Activated B cell treated with CpG ODN at 0.5 μM for 24 hours (primary cell): ENCODE measurements at regions of chr2 and their contacts with region 1.

Region 1: DNA sequence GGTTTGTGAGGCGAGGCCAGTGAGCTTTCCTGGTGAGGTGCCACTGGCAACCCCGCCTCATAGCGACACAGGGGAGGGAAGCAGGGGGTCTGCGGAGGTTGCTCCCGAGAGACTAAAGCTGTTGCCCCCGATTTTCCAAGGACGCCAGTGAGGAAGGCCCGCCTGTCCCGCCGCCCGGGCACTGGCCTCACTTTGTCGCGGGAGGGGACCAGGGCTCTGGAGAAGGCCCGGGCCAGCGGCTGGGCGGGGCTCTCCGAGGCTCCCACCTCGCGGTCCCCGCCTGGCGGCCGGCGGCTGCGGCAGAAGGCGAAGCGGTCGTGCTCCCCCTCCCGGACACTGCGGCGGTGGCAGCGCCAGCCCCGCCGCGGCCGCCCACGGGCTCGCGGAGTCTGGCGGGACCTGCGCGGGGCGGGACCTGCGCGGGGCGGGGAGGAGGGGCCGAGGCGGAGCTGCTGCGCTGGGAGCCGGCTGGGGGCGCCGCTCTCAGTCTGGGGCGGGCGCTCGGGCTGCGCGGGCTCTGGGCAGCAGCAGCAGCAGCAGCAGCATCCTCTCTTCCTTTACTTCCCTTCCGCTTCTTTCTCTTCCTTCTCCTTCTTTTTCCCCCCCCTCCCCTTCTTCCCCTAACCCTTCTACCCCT is at the start of gene MAP2:
- DNase-seq: peak; percentile 85
- ATAC-seq: peak; percentile 98
- H3K4me3 Mint-ChIP-seq: peak within 1 kb of the TSS; percentile 87
- H3K27ac Mint-ChIP-seq: no peak within 1 kb of the TSS
- H3K4me1 Mint-ChIP-seq: peaks cover 24% of the 10 kb centered on the region
- H3K27me3 Mint-ChIP-seq: peaks cover 4% of the 10 kb centered on the region
- CTCF ChIP-seq: peak; percentile 20
- total RNA-seq, gene MAP2: 1.4 and 1.9 TPM in 2 replicates

Region 2: DNA sequence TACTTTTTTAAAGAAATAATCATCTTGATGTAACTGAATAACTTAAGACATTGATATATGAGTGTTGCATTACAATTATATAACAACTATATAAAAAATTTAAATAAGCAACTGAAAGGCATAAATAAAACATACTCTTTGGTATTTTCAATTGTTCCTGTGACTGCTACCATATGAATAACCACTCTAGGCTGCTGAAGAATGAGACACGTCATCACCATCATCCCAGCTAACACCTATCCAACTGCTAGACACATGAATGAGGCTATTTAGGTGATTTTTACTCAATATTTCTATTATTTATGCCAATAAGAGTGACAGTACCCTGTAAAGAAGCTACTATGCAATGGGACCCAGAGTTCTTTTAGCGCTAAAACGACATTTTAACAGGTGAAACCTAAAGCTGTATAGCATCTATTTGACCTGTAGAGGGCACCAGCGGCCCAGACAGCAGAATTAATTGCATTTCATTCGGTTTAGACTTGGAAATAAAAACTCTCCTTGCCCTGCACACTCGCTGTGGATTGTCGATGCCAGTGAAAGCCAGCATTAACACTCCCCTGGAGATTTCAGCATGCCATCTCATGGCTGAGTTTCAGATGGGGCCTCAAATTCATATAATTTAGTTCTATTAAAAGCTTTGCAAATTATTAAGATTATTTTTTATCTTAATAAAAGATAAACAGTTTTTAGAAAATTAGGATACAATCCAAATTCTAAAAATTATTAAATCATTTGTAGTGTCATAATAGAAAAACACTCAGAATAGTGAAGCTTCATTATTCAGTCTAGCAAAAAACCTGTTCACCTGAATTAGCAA is 89.3 kb before region 1 on chr2:
- CTCF ChIA-PET with region 1: interaction called, 32 read pairs
- POLR2A ChIA-PET with region 1: no interaction called
- intact Hi-C with region 1: loop called (anchors 1 kb)
- DNase-seq: no peak
- ATAC-seq: peak; percentile 56
- H3K4me3 Mint-ChIP-seq: no peak overlapping the region
- H3K27ac Mint-ChIP-seq: no peak overlapping the region
- H3K4me1 Mint-ChIP-seq: no peaks in the 10 kb centered on the region
- H3K27me3 Mint-ChIP-seq: peaks cover 4% of the 10 kb centered on the region
- CTCF ChIP-seq: peak; percentile 97

Region 3: DNA sequence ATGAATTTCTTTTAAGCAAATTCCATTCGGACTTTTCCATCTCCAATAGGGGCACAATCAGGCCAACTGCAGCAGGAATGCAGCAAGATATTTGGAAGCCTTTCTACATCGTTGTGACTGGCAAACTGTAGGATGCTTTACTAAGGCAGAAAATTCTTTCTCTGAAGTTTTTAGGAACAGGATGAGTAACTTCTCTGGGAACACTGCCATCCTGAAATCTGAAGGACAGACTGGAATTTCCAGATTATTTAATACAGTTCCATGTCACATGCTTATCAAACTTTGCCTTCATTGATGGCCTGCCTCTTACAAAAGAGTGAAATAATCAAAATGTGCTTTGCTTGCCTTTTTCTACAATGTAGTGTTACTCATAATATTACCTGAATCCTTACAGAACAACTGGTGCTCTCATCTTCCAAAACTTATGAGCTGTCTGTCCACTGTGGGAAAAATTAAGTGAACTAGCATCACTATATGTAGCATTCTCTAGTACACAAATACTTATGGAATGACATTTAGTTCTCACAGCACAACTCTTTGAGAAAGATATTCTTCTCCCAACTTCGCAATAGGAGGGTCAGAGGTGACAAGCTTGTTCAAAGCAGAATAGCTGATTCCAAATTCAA is 31.8 kb before region 1 on chr2:
- CTCF ChIA-PET with region 1: no interaction called
- POLR2A ChIA-PET with region 1: no interaction called
- intact Hi-C with region 1: no loop called
- DNase-seq: no peak
- ATAC-seq: no peak
- H3K4me3 Mint-ChIP-seq: no peak overlapping the region
- H3K27ac Mint-ChIP-seq: no peak overlapping the region
- H3K4me1 Mint-ChIP-seq: no peaks in the 10 kb centered on the region
- H3K27me3 Mint-ChIP-seq: peaks cover 20% of the 10 kb centered on the region
- CTCF ChIP-seq: no peak

Region 4: GRCh38 chr2:209473930-209474419 is 50.3 kb after region 1 on chr2:
- CTCF ChIA-PET with region 1: no interaction called
- POLR2A ChIA-PET with region 1: no interaction called
- intact Hi-C with region 1: no loop called
- DNase-seq: no peak
- ATAC-seq: no peak
- H3K4me3 Mint-ChIP-seq: no peak overlapping the region
- H3K27ac Mint-ChIP-seq: no peak overlapping the region
- H3K4me1 Mint-ChIP-seq: no peaks in the 10 kb centered on the region
- H3K27me3 Mint-ChIP-seq: no peaks in the 10 kb centered on the region
- CTCF ChIP-seq: no peak

Region 5: GRCh38 chr2:209525834-209526281 is 102.2 kb after region 1 on chr2:
- CTCF ChIA-PET with region 1: interaction called, 10 read pairs
- POLR2A ChIA-PET with region 1: no interaction called
- intact Hi-C with region 1: loop called (anchors 1 kb)
- DNase-seq: no peak
- ATAC-seq: no peak
- H3K4me3 Mint-ChIP-seq: peak overlapping the region; percentile 69
- H3K27ac Mint-ChIP-seq: peak overlapping the region; percentile 78
- H3K4me1 Mint-ChIP-seq: peaks cover 50% of the 10 kb centered on the region
- H3K27me3 Mint-ChIP-seq: no peaks in the 10 kb centered on the region
- CTCF ChIP-seq: no peak

Region 6: GRCh38 chr2:209577376-209578357 is 154.0 kb after region 1 on chr2:
- CTCF ChIA-PET with region 1: interaction called, 29 read pairs
- POLR2A ChIA-PET with region 1: interaction called, 4 read pairs
- intact Hi-C with region 1: loop called (anchors 1 kb)
- DNase-seq: no peak
- ATAC-seq: no peak
- H3K4me3 Mint-ChIP-seq: no peak overlapping the region
- H3K27ac Mint-ChIP-seq: no peak overlapping the region
- H3K4me1 Mint-ChIP-seq: peaks cover 8% of the 10 kb centered on the region
- H3K27me3 Mint-ChIP-seq: no peaks in the 10 kb centered on the region
- CTCF ChIP-seq: no peak

Region 7: DNA sequence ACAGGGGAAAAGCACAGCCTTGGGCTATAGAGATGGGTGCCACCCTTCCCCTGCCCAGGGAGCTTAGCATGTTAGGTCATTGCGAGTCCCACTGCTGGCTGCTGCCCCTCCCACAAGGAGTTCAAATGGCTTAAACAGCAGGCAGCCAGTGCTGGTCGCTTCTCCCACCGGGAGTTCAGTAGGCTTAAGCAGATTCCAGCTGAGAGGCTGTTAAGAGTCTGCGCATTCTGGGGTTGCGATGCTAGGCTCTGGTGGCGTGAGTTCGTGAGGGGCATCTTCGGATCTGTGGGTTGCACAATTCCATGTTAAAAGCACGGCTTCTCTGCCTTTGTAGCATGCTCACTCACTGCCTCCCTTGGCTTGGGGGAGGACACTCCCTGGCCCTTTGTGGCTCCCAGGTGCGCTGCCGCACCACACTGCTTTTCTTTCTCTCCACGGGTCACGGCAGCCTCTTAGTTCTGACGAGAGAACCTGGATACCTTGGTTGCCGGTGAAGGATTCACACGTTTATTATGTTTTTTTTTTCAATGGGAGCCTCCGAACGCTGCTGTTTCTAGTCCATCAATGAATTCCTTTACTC is 441.1 kb after region 1 on chr2:
- CTCF ChIA-PET with region 1: no interaction called
- POLR2A ChIA-PET with region 1: no interaction called
- intact Hi-C with region 1: no loop called
- DNase-seq: no peak
- ATAC-seq: no peak
- H3K4me3 Mint-ChIP-seq: no peak overlapping the region
- H3K27ac Mint-ChIP-seq: no peak overlapping the region
- H3K4me1 Mint-ChIP-seq: no peaks in the 10 kb centered on the region
- H3K27me3 Mint-ChIP-seq: no peaks in the 10 kb centered on the region
- CTCF ChIP-seq: no peak

Region 8: DNA sequence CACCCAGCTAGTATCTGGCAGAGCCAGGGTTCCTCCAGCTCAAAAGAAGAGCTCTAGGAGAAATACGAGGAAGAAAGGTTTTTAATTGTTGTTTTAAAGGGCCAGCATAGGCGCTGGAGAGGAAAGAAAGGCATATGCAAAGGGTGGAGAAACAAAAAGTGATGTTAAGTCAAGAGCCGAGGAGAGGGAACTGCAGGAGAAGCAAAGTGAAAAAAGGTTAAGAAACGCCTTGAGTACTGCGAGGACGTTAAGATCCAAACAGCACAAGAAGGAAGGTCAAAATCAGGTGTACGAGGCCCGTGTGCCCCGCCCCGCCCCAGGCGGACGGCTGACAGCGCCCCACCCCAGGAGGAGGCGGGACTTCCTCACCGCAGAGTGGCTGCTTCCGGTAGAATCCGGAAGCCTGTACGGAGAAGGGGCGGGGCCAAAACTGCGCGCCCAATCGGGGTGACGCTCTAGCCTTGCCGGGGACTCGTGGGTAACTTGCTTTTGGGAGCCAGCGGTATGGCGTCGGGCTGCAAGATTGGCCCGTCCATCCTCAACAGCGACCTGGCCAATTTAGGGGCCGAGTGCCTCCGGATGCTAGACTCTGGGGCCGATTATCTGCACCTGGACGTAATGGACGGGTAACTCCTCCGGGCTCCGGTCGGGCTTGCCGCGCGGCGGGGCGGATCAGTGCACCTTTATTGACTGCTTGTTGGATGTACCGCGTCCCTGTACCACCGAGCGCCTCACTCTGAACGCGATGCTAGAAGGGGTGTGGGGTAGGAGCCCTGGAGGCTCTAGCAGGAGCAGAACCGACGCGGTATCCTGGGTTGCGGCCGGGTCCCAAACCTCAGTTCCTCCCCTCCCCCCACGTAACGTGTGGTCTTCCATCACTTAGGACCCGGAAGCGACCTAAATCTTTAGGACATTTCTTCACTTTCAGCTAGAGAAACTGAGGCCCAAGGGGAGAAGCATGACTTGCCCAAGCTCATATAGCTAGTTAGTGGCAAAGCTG is 578.8 kb after region 1 on chr2 and contains the start of gene RPE:
- CTCF ChIA-PET with region 1: no interaction called
- POLR2A ChIA-PET with region 1: no interaction called
- intact Hi-C with region 1: loop called (anchors 10 kb)
- DNase-seq: peak; percentile 96
- ATAC-seq: peak; percentile 99
- H3K4me3 Mint-ChIP-seq: peak within 1 kb of the TSS; percentile 96
- H3K27ac Mint-ChIP-seq: peak within 1 kb of the TSS; percentile 89
- H3K4me1 Mint-ChIP-seq: peaks cover 55% of the 10 kb centered on the region
- H3K27me3 Mint-ChIP-seq: peaks cover 3% of the 10 kb centered on the region
- CTCF ChIP-seq: no peak
- total RNA-seq, gene RPE: 43.3 and 54.7 TPM in 2 replicates

Region 9: DNA sequence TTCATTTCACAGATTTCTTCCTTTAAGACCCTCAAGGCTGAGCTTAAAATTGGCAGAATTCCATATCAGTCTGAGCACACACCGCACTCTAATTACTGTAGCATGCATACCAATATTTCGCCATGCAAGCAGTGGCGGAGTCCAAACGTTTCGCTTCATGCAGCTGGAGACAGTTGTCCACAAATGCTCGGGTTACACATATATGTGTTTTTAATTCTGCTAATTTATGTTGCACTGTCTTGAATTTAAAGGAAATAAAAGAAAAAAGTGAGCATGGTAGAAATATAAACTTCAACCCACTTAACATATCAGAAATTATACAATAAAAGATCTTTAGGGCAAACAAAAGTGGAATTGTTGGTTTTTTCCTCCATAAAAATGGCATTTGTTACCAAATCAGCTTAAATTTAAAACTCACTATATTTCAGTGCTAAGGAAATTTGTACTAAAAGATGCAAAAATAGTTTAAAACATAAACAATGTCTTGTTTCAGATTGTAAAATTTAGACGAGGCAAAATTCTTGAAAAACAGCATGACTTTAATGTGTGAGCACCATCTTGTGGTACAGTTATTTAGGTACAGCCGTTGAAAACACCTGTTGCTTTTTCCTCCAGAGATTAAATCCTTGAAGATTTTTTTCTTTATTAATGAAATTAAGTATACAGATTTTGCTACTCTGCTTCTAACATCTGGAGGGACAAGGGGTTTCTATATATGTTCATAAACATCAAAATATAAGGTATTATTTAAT is 771.6 kb after region 1 on chr2:
- CTCF ChIA-PET with region 1: no interaction called
- POLR2A ChIA-PET with region 1: no interaction called
- intact Hi-C with region 1: loop called (anchors 1 kb)
- DNase-seq: no peak
- ATAC-seq: no peak
- H3K4me3 Mint-ChIP-seq: no peak overlapping the region
- H3K27ac Mint-ChIP-seq: no peak overlapping the region
- H3K4me1 Mint-ChIP-seq: no peaks in the 10 kb centered on the region
- H3K27me3 Mint-ChIP-seq: peaks cover 2% of the 10 kb centered on the region
- CTCF ChIP-seq: no peak